ENCODE measurements at regions of chrX and their contacts with region 1.

Region 1: DNA sequence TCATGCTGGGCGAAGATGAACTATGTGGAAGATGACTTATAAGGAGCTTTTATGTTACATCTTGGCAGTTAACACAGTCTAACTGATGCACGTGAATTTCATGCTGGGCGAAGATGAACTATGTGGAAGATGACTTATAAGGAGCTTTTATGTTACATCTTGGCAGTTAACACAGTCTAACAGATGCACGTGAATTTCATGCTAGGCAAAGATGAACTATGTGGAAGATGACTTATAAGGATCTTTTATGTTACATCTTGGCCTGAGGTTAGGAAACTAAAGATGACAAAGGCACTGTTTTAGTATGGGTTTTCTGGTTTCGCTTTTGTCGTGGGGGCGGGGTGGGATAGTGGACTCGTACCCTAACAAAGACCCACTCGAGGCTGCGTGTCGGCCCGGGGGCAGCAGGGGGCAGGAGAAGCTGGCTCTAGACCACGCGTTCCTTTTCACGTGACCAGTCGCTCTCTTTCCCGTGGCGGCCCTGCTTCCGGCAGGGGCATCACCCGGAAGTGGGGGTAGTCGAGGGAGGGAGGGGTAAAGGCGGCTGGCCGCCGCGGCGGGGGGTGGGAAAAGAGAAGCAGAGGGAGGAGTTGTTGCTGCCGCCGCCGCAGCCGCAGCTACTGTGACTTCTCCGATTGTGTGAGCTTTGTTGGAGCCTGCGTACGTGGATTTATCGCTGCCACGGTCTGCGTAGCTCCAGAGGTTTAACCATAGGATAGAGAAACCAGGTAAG is at the start of gene ATP7A:
- DNase-seq: peak; percentile 92
- H3K4me3 Mint-ChIP-seq: peak within 1 kb of the TSS; percentile 97
- H3K27ac Mint-ChIP-seq: peak within 1 kb of the TSS; percentile 98
- H3K4me1 Mint-ChIP-seq: peaks cover 16% of the 10 kb centered on the region
- H3K27me3 Mint-ChIP-seq: no peaks in the 10 kb centered on the region
- total RNA-seq, gene ATP7A: 11.9 to 13.3 TPM

Region 2: DNA sequence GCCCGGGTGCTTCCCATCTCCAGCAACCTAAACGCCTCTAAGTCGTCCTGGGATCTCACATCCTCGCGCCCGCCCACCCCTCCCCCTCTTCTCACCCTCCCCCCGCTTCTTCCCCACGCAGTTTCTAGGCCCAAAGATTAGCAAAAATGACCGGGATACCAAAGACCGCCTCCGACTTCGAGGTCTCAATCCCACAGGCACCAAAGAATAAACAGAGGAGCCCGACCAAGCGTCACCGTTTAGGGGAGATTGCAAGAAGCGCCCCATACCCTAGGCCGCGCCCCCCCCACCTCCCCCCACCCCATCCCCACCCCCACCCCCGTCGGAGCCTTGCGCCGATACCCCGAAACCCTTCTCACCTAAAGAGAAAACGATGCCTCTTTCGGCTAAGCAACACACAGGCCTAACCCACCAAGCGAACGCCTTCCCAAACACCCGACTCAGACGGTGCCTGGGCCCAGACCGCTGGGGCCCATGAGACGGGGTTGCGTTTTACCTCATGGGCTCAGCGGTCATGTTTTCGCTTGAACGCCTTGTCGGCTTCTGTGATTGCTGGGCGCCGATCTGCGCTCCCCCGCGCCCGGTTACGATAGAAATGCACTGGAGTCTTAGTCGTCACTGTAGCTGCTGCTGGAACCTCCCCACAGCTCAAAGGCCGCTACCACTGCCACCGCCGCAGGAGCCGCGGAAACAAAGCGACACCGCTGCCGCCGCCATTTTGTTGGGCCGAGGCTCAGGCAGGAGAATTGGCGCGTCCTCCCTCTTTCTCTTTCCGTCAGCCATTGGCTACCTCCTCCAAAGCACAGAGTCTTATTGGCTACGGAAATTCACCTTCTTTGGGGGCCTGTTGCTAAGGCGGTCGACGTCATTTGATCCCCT is 124.5 kb before region 1 on chrX and contains the start of gene ATRX:
- CTCF ChIA-PET with region 1: no interaction called
- POLR2A ChIA-PET with region 1: no interaction called
- DNase-seq: peak; percentile 83
- H3K4me3 Mint-ChIP-seq: peak within 1 kb of the TSS; percentile 98
- H3K27ac Mint-ChIP-seq: peak within 1 kb of the TSS; percentile 100
- H3K4me1 Mint-ChIP-seq: peaks cover 30% of the 10 kb centered on the region
- H3K27me3 Mint-ChIP-seq: no peaks in the 10 kb centered on the region
- total RNA-seq, gene ATRX: 66.4 to 70.9 TPM

Region 3: GRCh38 chrX:77899081-77899828 is 11.0 kb before region 1 on chrX and contains the start of gene COX7B:
- CTCF ChIA-PET with region 1: interaction called, 44 read pairs
- POLR2A ChIA-PET with region 1: no interaction called
- DNase-seq: peak; percentile 83
- H3K4me3 Mint-ChIP-seq: peak within 1 kb of the TSS; percentile 90
- H3K27ac Mint-ChIP-seq: peak within 1 kb of the TSS; percentile 94
- H3K4me1 Mint-ChIP-seq: peaks cover 22% of the 10 kb centered on the region
- H3K27me3 Mint-ChIP-seq: no peaks in the 10 kb centered on the region
- total RNA-seq, gene COX7B: 244 to 298 TPM

Measured in activated CD4-positive, alpha-beta T cell treated with anti-CD3 and anti-CD28 coated beads, Interleukin-2, amount 10 ng/mL, durations not matched to agents 7 days and 5 days (primary cell).